ENCODE measurements at regions of chr4 and their contacts with region 1.

Region 1: DNA sequence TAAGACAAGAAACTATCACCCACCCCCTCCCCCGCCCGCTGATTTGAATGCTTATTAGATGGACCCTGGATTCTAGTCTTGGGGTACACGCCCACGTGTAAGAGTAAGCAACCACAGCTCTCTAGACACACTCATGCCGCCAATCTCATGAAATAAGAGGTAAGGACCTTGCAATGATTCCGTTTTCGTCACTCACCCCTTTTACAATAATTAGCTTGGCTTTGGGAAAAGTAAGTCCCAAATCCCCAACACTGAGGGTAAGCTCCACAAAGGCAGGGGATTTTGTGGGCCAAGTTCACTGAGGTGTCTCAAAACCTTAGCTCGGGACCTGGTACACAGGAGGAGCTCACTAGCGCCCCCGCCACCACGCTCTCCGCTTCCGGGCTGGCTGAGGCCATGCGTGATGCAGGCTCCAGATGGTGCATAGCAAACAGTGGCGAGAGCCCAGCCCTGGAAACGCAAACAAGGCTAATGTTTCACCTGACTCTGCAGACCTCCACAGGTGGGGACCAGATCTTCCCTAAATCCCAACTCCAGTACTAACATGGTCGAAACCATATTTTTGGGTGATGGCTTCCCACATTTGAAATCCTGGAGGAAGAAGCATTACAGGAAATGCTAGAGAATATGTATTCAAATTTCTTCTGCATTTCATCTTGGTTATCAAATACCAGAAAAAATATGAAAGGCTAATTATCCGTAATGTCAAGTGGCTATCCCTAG is 4.1 kb downstream of the PLAC8 start:
- DNase-seq: peak; percentile 94
- ATAC-seq: peak; percentile 88
- H3K4me3 Mint-ChIP-seq: peak overlapping the region; percentile 80
- H3K27ac Mint-ChIP-seq: peak overlapping the region; percentile 92
- H3K4me1 Mint-ChIP-seq: peaks cover 62% of the 10 kb centered on the region
- H3K27me3 Mint-ChIP-seq: no peaks in the 10 kb centered on the region

Region 2: DNA sequence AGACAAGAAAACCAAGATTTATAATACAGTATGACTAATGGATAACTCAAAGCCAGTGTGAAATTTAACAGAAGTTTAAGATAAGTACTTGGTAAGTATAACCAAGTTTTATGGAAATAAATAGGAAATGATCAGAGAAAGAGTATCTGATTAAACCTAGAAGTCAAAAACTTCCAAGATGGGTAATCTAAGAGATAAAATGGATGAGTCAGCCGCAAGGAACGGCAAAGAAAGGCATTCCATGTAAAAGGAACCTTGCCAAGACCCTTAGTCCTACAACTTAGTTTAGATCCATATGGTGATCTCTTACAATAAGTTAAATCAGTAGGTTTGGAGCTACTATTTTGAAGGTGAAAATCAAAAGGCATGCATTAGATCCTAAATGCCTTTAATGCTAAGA is 134.6 kb before region 1 on chr4:
- CTCF ChIA-PET with region 1: no interaction called
- DNase-seq: no peak
- ATAC-seq: no peak
- H3K4me3 Mint-ChIP-seq: no peak overlapping the region
- H3K27ac Mint-ChIP-seq: no peak overlapping the region
- H3K4me1 Mint-ChIP-seq: peaks cover 2% of the 10 kb centered on the region
- H3K27me3 Mint-ChIP-seq: no peaks in the 10 kb centered on the region

Region 3: DNA sequence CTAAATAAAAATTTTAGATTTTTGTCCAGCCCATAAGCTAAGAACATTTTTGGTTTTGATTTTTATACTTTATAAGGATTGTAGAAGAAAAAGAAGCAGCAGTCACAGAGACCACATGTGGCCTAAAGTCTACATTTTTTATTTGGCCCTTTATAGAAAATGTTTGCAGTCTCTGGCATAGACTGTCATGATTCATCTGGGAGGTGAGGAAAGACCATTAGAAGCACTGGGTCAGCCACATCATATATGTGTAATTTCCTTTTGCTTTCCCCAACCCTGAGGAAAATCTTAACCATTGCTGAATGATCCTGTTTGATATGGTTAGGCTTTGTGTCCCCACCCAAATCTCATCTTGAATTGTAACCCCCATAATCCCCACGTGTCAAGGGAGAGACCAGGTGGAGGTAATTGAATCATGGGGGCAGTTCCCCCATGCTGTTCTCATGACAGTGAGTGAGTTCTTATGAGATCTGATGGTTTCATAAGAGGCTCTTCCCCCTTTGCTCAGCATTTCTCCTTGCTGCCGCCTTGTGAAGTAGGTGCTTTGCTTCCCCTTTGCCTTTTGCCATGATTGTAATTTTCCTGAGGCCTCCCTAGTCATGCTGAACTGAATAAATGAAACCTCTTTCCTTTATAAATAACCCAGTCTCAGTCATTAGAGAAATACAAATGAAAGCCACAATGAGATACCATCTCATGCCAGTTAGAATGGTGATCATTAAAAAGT is 87.5 kb before region 1 on chr4:
- CTCF ChIA-PET with region 1: no interaction called
- DNase-seq: no peak
- ATAC-seq: no peak
- H3K4me3 Mint-ChIP-seq: no peak overlapping the region
- H3K27ac Mint-ChIP-seq: no peak overlapping the region
- H3K4me1 Mint-ChIP-seq: peaks cover 12% of the 10 kb centered on the region
- H3K27me3 Mint-ChIP-seq: peaks cover 20% of the 10 kb centered on the region

Region 4: DNA sequence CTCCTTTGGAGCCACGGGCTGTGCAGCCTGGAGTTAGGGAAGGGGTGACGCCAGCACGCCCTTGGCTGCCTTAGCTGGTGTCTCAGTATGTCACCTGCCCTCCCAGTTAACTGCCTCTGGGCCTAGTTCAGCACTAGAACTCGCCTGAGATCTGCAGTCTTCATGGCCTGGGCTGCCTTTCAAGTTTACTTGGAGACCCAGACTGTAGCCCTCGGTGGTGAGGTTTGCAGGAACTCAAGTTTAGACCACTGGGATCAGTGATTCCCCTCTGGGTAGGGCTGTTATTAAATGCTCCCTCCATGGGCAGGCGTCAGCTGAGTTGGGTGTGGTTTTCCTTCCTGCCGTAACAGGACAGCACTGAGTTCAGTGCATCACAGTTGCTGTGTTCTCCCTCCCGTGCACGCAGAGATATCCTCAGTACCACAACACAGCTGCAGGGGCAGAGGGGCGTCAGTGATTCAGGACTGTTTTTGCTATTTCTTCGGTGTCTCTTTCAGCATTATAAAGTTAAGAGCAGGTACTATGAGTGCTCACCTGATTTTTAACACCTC is 26.4 kb before region 1 on chr4:
- CTCF ChIA-PET with region 1: interaction called, 20 read pairs
- DNase-seq: peak; percentile 87
- ATAC-seq: peak; percentile 98
- H3K4me3 Mint-ChIP-seq: no peak overlapping the region
- H3K27ac Mint-ChIP-seq: peak overlapping the region; percentile 84
- H3K4me1 Mint-ChIP-seq: peaks cover 26% of the 10 kb centered on the region
- H3K27me3 Mint-ChIP-seq: no peaks in the 10 kb centered on the region

Region 5: DNA sequence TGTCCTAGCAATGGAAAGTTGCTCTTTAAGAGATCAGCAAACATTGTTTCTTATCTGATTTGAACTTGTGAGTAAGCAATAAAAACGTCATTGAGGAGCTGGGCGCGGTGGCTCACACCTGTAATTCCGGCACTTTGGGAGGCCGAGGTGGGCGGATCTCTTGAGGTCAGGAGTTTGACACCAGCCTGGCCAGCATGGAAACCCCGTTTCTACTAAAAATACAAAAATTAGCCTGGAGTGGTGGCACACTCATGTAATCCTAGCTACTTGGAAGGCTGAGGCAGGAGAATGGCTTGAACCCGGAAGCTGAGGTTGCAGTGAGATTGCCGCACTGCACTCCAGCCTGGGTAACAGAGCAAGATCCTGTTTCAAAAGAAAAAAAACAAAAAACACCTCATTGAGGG is 15.4 kb after region 1 on chr4:
- CTCF ChIA-PET with region 1: interaction called, 12 read pairs
- DNase-seq: peak; percentile 69
- ATAC-seq: peak; percentile 84
- H3K4me3 Mint-ChIP-seq: peak overlapping the region; percentile 55
- H3K27ac Mint-ChIP-seq: peak overlapping the region; percentile 74
- H3K4me1 Mint-ChIP-seq: peaks cover 14% of the 10 kb centered on the region
- H3K27me3 Mint-ChIP-seq: peaks cover 4% of the 10 kb centered on the region

Region 6: DNA sequence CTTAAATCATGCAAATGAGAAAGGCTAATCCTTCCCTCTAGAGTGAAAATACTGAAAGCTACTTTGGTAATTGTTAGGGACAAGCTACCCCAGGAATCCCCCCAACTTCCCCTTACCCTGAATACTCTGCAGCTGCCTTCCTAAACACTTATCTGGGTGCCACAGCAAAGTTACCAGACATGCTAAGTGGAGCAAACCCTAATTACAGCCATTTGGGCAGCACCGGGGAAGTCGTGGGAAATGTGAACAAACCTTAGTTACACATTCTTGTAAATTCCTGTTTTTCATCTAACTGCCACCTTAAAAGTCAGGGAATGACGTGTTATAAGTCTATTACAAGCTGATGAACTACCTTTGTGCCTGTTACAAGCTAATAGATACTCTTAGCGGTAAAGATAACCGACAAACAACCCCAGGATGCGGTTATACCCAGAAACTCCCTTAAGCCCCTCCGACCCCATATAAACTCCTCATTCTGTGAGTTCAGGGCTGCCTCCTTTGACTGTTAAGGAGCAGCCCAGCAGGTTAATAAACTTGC is 70.1 kb after region 1 on chr4:
- CTCF ChIA-PET with region 1: no interaction called
- DNase-seq: no peak
- ATAC-seq: no peak
- H3K4me3 Mint-ChIP-seq: no peak overlapping the region
- H3K27ac Mint-ChIP-seq: no peak overlapping the region
- H3K4me1 Mint-ChIP-seq: no peaks in the 10 kb centered on the region
- H3K27me3 Mint-ChIP-seq: peaks cover 11% of the 10 kb centered on the region

Region 7: DNA sequence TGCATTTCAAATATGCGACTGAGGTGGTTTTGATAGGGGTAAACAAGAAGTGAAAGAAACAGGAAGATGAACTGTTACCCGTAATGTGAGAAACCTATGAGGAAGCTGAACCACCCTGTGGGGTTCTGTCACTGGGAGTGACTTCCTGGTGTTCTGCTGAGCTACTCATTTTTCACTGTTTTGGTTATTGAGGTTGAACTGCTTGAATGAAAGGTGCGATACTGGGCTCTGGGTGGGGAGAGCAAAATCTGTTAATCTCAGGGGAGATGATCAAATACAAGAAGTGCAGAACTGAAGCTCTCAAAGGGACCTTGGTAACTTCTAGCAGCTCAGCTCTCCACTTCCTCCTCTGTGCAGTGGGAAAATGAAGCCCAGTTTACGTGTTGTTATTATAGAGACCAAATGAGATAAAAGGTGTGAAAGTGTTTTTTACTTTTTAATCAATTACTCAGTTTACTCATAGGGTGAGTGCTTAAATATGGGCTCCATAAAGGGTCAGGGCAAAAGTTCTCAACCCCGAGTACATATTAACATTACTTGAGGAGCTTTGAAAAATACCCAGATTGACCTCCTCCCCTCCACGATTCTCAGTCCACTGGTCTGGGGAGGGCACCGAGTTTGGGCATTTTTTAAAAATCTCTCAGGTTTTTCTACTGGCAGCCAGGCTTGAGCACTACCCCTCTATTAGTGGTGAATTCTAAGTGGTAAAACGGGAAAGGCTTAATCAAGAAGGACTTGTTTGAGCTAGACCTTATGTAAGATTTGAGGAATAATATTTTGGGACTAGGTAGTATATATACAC is 107.5 kb after region 1 on chr4:
- CTCF ChIA-PET with region 1: interaction called, 15 read pairs
- DNase-seq: peak; percentile 91
- ATAC-seq: peak; percentile 90
- H3K4me3 Mint-ChIP-seq: peak overlapping the region; percentile 41
- H3K27ac Mint-ChIP-seq: peak overlapping the region; percentile 85
- H3K4me1 Mint-ChIP-seq: peaks cover 61% of the 10 kb centered on the region
- H3K27me3 Mint-ChIP-seq: peaks cover 19% of the 10 kb centered on the region

Region 8: GRCh38 chr4:83259586-83259985 is 149.2 kb after region 1 on chr4:
- CTCF ChIA-PET with region 1: interaction called, 21 read pairs
- DNase-seq: no peak
- ATAC-seq: no peak
- H3K4me3 Mint-ChIP-seq: no peak overlapping the region
- H3K27ac Mint-ChIP-seq: no peak overlapping the region
- H3K4me1 Mint-ChIP-seq: peaks cover 3% of the 10 kb centered on the region
- H3K27me3 Mint-ChIP-seq: no peaks in the 10 kb centered on the region

Measured in activated CD8-positive, alpha-beta memory T cell treated with anti-CD3 and anti-CD28 coated beads, Interleukin-2, amount 10 ng/mL, durations not matched to agents 7 days and 5 days (primary cell).